AG04450 (cell line): ENCODE measurements at regions of chr6 and their contacts with region 1.

Region 1: GRCh38 chr6:84422380-84422968 is 195.0 kb upstream of the CEP162 start:
- DNase-seq: peak; percentile 15
- H3K4me3 ChIP-seq: no peak overlapping the region
- H3K27ac ChIP-seq: no peak overlapping the region
- H3K27me3 ChIP-seq: peaks cover 6% of the 10 kb centered on the region
- CTCF ChIP-seq: peak; percentile 81

Region 2: GRCh38 chr6:84204011-84204410 is 218.5 kb before region 1 on chr6:
- CTCF ChIA-PET with region 1: no interaction called
- POLR2A ChIA-PET with region 1: no interaction called
- DNase-seq: no peak
- H3K4me3 ChIP-seq: no peak overlapping the region
- H3K27ac ChIP-seq: no peak overlapping the region
- H3K27me3 ChIP-seq: no peaks in the 10 kb centered on the region
- CTCF ChIP-seq: no peak

Region 3: GRCh38 chr6:84434550-84434949 is 12.1 kb after region 1 on chr6:
- CTCF ChIA-PET with region 1: interaction called, 15 read pairs
- POLR2A ChIA-PET with region 1: no interaction called
- DNase-seq: no peak
- H3K4me3 ChIP-seq: no peak overlapping the region
- H3K27ac ChIP-seq: no peak overlapping the region
- H3K27me3 ChIP-seq: no peaks in the 10 kb centered on the region
- CTCF ChIP-seq: no peak

Region 4: GRCh38 chr6:84442208-84442607 is 19.7 kb after region 1 on chr6:
- CTCF ChIA-PET with region 1: interaction called, 15 read pairs
- POLR2A ChIA-PET with region 1: no interaction called
- DNase-seq: no peak
- H3K4me3 ChIP-seq: no peak overlapping the region
- H3K27ac ChIP-seq: no peak overlapping the region
- H3K27me3 ChIP-seq: no peaks in the 10 kb centered on the region
- CTCF ChIP-seq: no peak

Region 5: DNA sequence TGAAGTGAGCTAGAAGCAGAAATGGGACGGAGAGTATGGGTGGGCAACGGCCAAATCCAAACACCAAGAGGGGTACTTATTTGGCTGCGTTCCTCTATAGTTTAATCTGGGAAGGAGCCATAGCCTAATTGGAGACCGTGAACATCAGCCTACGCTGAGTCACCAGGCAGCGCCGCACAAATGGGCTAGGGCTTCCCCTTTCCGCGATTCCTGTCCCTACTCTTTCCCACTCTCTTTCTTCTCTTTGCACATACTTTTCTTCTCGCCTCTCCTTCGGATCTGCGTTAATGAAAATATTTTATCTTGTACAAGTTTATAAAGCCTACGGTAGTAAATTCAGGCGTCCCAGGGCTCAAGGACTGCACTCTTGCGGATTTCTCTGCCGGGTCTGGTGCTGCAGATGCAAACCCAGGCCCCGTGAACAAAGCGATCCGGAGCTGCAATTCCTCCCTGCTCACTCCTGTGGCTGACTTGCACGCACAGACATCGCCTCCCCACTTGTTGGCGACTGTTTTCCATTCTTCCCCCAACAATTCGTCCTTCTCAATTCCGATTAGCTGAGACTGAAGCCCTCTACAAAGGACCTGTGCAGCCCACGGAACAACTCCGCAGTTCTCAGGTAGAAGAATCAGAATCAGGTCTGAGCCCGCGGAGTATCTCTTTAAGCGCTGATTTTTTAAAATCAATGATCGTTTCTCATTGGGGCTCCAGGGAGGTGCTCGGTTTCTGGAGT is 346.1 kb after region 1 on chr6:
- CTCF ChIA-PET with region 1: interaction called, 26 read pairs
- POLR2A ChIA-PET with region 1: no interaction called
- DNase-seq: no peak
- H3K4me3 ChIP-seq: no peak overlapping the region
- H3K27ac ChIP-seq: no peak overlapping the region
- H3K27me3 ChIP-seq: peaks cover 79% of the 10 kb centered on the region
- CTCF ChIP-seq: no peak

Region 6: GRCh38 chr6:84774157-84774984 is 351.9 kb after region 1 on chr6:
- CTCF ChIA-PET with region 1: interaction called, 26 read pairs
- POLR2A ChIA-PET with region 1: no interaction called
- DNase-seq: no peak
- H3K4me3 ChIP-seq: peak overlapping the region; percentile 20; the same call in 1 of the 2 replicates
- H3K27ac ChIP-seq: no peak overlapping the region
- H3K27me3 ChIP-seq: peaks cover 65% of the 10 kb centered on the region
- CTCF ChIP-seq: peak; percentile 49

Region 7: DNA sequence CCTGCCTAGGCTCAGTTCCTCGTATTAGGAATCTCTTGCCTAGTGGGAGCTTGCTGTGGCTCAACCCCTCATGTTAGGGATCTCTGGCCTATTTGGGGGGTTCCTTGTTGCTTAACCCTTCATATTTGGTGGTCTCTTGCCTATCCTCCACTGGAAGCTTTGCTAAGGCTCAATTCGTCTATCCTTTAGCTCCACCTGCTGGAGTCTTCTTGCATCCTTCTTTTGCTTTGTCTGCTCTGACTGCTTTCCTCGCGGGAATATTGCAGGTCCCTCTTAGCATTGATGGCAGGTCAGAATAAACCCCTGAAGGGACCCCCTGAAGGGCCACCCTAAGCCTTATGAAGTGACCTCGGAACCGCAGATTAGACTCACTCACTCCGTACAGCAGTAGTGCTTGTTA is 544.9 kb after region 1 on chr6:
- CTCF ChIA-PET with region 1: interaction called, 13 read pairs
- POLR2A ChIA-PET with region 1: no interaction called
- DNase-seq: peak; percentile 3
- H3K4me3 ChIP-seq: no peak overlapping the region
- H3K27ac ChIP-seq: no peak overlapping the region
- H3K27me3 ChIP-seq: no peaks in the 10 kb centered on the region
- CTCF ChIP-seq: peak; percentile 51